HEK293 (cell line): ENCODE measurements at regions of chr5 and their contacts with region 1.

Region 1: DNA sequence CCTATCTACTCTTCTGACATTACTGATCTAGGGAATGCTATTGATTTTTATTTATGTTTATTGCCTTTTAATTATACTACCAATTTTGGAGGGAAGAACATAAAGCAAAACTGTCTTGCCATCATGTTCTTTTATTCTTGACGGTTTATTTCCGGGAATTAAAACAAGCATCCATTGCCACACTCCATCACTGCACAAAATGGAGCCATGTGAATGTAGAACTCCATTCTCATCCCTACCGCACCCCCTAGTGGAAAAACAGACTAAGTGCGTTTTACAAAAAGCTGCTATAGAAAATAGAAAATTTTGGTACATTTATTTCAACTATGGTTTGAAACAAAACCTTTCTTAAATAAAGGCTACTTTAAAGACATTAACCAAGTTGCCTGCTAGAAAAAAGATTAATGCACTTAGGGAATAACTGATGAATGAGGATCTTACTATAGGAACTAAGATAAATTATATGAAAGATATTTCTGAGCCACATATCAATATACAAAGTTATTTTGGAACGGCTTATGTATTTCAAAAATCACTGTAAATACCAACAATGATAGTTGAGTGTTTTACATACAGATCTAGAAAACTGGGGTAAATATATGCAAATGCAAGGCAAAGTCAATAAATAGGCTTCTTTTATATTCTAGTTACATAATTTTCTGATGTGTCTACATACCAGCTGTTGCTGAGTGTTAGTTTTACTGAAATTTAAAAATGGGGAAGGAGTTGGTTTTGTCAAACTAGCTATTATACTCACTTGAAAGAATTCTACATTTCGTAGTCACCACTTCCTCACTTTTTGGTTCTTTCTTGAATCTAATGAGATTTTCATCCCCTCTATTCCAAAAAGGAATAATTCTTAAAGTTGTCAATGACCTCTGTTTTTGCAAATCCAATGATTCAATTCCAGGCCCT is 26.5 kb downstream of the OXCT1 start:
- H3K4me3 ChIP-seq: no peak overlapping the region
- H3K27ac ChIP-seq: no peak overlapping the region
- H3K4me1 ChIP-seq: no peaks in the 10 kb centered on the region
- CTCF ChIP-seq: peak; percentile 66

Region 2: DNA sequence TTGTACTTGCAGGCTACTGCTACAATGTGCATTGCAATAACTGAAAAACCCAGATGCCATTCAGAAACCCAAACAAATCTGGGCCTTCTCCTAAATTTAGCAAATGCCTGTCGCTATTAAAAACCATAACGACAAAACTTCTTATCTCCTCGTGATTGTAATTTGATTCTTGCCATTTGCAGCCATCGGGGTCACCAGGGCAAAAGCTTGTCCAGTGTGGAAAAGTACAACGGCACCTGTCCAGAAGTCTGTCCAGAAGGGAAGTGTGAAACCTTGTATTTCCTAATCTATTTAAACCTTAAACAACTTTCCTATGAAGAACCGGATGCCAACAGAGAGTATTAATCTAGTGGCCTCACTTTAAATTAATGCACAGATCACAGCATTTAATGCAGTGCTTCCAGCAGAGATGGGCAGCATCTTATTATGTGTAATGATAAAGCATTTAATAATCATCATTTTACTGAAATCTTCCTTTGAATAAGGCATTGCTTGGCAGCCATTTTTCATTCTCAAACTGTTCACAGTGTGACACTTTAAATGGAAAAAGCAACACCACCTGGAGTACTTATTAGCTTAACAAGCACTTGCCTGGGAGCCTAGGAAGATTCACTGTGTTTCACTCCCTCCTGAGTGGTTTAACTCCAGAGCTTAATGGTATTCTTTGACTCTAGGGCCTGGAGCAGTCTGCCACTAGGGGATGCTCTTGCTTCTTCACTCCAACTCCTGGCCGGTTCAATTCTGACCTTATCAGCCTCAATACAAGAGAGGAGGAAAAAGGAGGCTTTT is 939.3 kb before region 1 on chr5:
- CTCF ChIA-PET with region 1: interaction called, 11 read pairs
- POLR2A ChIA-PET with region 1: no interaction called
- H3K4me3 ChIP-seq: no peak overlapping the region
- H3K27ac ChIP-seq: no peak overlapping the region
- H3K4me1 ChIP-seq: no peaks in the 10 kb centered on the region
- CTCF ChIP-seq: peak; percentile 71; the same call in 1 of the 2 replicates

Region 3: DNA sequence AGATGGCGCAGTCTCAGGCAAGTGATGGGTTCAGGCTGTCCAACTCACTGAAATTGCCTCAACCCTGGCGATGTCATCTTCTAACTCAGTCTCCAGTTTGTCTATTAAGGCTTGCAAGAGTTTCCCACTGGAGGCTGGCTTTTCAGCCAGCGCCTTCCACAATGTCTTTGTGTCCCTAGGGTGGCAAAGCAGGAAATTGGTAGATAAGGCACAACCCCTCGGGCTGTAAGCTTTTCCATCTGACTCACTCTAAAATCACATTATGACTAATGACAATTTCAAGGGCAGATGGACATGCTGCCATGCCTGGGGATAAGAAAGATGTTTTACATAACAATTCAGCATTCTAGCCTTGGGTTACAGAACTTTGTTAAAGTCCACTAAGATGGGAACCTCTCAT is 834.5 kb before region 1 on chr5:
- CTCF ChIA-PET with region 1: no interaction called
- POLR2A ChIA-PET with region 1: no interaction called
- H3K4me3 ChIP-seq: no peak overlapping the region
- H3K27ac ChIP-seq: no peak overlapping the region
- H3K4me1 ChIP-seq: no peaks in the 10 kb centered on the region
- CTCF ChIP-seq: no peak

Region 4: GRCh38 chr5:41707853-41708603 is 135.7 kb before region 1 on chr5:
- CTCF ChIA-PET with region 1: interaction called, 18 read pairs
- POLR2A ChIA-PET with region 1: no interaction called
- H3K4me3 ChIP-seq: no peak overlapping the region
- H3K27ac ChIP-seq: no peak overlapping the region
- H3K4me1 ChIP-seq: no peaks in the 10 kb centered on the region
- CTCF ChIP-seq: no peak

Region 5: DNA sequence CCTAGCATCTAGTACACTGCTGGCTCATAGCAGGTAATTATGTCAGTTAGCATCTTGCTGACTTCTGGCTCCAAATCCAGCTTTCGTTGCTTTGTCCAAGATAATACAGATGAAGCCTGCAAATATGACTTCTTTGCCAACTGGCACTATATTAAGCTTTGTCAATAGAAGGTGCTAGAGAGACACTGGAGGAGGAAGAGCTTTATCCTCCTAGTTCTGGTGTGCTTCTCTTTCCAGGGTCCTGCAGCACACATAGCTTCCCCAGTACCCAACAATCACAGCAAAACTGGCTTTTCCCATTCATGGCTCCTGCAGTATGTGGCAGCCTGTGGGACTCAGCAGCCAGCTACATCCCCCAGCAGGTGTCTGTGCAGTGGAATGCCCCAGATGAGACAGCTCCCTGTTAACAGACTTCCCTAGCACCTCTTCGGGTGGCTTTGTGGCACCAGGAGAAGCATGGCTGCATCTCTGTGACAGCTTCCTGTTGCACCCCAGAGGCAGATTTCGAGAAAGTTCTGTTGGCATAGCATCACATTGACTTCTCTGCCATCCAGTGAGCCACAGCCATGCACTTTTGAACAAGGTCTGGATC is 121.3 kb before region 1 on chr5:
- CTCF ChIA-PET with region 1: interaction called, 17 read pairs
- POLR2A ChIA-PET with region 1: no interaction called
- H3K4me3 ChIP-seq: no peak overlapping the region
- H3K27ac ChIP-seq: no peak overlapping the region
- H3K4me1 ChIP-seq: no peaks in the 10 kb centered on the region
- CTCF ChIP-seq: no peak

Region 6: DNA sequence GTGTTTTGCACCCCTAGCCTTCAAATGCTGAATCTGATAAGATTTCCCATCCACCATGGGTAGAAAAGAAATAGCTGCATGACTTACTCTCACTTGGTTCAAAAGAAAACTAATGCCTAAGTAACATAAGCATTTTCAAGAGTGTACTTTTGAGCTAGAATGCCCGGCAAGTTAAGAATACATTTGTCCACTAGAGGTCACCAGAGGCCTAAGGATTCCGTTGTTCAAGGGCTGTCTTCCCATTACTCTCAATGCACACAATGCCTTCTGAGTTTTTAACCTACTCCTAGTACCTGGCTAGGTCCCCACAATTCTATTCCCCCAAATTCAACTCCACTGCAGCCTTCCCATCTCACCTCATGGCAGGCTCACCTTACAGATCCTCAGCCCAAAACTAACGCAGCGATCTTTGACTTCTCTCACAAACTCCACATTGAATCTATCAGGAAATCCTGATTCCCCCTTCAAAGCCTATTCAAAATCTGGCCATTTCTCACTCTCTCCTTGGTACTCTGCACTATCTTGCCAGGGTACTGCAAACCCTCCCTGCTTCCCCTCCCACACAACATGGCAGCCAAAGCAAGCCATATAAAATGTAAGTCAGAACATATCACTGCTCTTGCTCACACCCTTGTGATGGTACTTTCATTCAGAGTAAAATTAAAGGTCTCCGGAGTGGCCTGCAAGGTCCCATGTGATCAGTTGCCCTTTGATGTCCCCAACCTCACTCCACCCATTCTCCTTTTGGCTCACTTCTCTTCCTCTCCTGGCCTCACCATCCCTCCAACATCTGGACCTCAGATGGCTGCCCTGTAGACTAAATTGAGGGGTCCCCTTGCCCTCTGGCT is 13.2 kb after region 1 on chr5:
- CTCF ChIA-PET with region 1: interaction called, 14 read pairs
- POLR2A ChIA-PET with region 1: no interaction called
- H3K4me3 ChIP-seq: no peak overlapping the region
- H3K27ac ChIP-seq: no peak overlapping the region
- H3K4me1 ChIP-seq: no peaks in the 10 kb centered on the region
- CTCF ChIP-seq: peak; percentile 67; the same call in 1 of the 2 replicates